CD14-positive monocyte (primary cell): ENCODE measurements at regions of chr11 and their contacts with region 1.

Region 1: GRCh38 chr11:6022956-6023355 is 7.6 kb downstream of the OR56A1 start:
- DNase-seq: peak; percentile 48 to 75 (median 62)
- H3K4me3 ChIP-seq: no peak overlapping the region
- H3K4me3 Mint-ChIP-seq: no peak overlapping the region
- H3K27ac ChIP-seq: no peak overlapping the region
- H3K27ac Mint-ChIP-seq: no peak overlapping the region
- H3K4me1 ChIP-seq: no peaks in the 10 kb centered on the region
- H3K4me1 Mint-ChIP-seq: peaks cover 2% of the 10 kb centered on the region
- H3K27me3 ChIP-seq: peaks cover 7 to 25% of the 10 kb centered on the region in 2 donors
- H3K27me3 Mint-ChIP-seq: peaks cover 22 to 36% (median 23%) of the 10 kb centered on the region in 3 donors
- CTCF ChIP-seq: peak; percentile 82

Region 2: GRCh38 chr11:6127881-6128280 is 104.9 kb after region 1 on chr11:
- intact Hi-C with region 1: no loop called
- DNase-seq: peak; percentile 54 to 77 (median 69)
- H3K4me3 ChIP-seq: no peak overlapping the region
- H3K4me3 Mint-ChIP-seq: no peak overlapping the region
- H3K27ac ChIP-seq: peak overlapping the region in 1 of 2 donors; percentile 82
- H3K27ac Mint-ChIP-seq: peak overlapping the region; percentile 88 to 95 (median 95)
- H3K4me1 ChIP-seq: peaks cover 58 to 72% of the 10 kb centered on the region in 2 donors
- H3K4me1 Mint-ChIP-seq: peaks cover 59% of the 10 kb centered on the region
- H3K27me3 ChIP-seq: no peaks in the 10 kb centered on the region
- H3K27me3 Mint-ChIP-seq: no peaks in the 10 kb centered on the region
- CTCF ChIP-seq: no peak

Region 3: GRCh38 chr11:6315811-6316425 is 293.0 kb after region 1 on chr11:
- intact Hi-C with region 1: loop called (anchors 5 kb)
- DNase-seq: peak; percentile 48 to 69 (median 68)
- H3K4me3 ChIP-seq: no peak overlapping the region
- H3K4me3 Mint-ChIP-seq: no peak overlapping the region
- H3K27ac ChIP-seq: no peak overlapping the region
- H3K27ac Mint-ChIP-seq: no peak overlapping the region
- H3K4me1 ChIP-seq: peaks cover 19 to 24% of the 10 kb centered on the region in 2 donors
- H3K4me1 Mint-ChIP-seq: peaks cover 24% of the 10 kb centered on the region
- H3K27me3 ChIP-seq: peaks cover 19 to 62% of the 10 kb centered on the region in 2 donors
- H3K27me3 Mint-ChIP-seq: peaks cover 40 to 65% (median 47%) of the 10 kb centered on the region in 3 donors
- CTCF ChIP-seq: peak; percentile 86

Region 4: GRCh38 chr11:6362873-6363678 is 340.1 kb after region 1 on chr11:
- intact Hi-C with region 1: loop called in 1 of 2 experiments (anchors 5 kb)
- DNase-seq: peak; percentile 42 to 54 (median 49)
- H3K4me3 ChIP-seq: no peak overlapping the region
- H3K4me3 Mint-ChIP-seq: no peak overlapping the region
- H3K27ac ChIP-seq: no peak overlapping the region
- H3K27ac Mint-ChIP-seq: no peak overlapping the region
- H3K4me1 ChIP-seq: no peaks in the 10 kb centered on the region
- H3K4me1 Mint-ChIP-seq: no peaks in the 10 kb centered on the region
- H3K27me3 ChIP-seq: no peaks in the 10 kb centered on the region
- H3K27me3 Mint-ChIP-seq: no peaks in the 10 kb centered on the region
- CTCF ChIP-seq: peak; percentile 76